CD8-positive, alpha-beta T cell (primary cell): ENCODE measurements at regions of chr15 and their contacts with region 1.

Region 1: DNA sequence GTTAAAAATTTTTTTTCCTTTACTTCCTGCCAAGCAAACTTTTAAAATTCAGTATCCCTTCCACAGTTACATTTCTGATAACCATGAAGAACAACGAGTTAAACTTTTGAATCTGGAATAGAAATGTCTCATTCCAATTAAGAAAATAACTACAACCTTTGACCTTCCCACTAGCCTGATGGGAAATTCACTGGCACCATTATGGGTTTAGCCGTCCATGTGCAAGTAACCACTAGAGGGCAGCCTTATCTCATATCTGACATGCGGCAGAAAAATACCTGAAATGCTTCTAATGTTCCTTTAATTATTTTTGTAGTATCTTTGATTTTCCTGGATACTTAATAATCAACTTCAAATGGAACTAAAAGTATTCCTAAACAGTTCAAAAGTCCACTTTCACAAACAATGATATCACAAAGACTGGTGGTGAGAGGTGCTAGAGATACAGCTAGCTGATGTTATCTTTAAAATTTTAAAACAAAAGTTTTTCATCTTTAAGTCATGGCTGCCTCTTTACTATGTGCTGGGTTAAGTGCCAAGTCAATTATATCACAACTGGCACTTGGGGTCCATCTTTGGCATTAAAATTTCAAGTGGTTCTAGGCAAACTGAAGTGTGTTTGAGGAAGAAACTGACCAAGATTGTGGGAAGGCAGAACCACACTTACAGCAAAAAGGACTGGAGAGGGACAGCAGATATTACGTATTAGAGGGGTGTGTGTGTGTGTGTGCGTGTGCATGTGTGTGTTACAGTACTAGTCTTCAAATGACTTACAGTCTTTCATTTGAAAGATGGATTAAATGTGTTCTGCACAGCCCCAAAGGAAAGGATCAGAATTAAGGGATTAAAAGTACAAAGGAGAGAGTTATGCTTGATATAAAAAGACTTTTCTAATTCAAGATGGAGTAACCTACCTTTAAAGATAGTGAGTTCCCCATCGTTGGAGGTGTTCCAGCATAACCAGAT is 107.1 kb upstream of the ICE2 start:
- DNase-seq: peak in 6 of 9 experiments; percentile 63 to 90 (median 66)
- ATAC-seq: peak; percentile 13
- H3K4me3 ChIP-seq: no peak overlapping the region
- H3K4me3 Mint-ChIP-seq: peak overlapping the region; percentile 77
- H3K27ac ChIP-seq: peak overlapping the region in 1 of 2 experiments; percentile 85
- H3K27ac Mint-ChIP-seq: peak overlapping the region; percentile 92
- H3K4me1 ChIP-seq: peaks cover 89% of the 10 kb centered on the region
- H3K4me1 Mint-ChIP-seq: peaks cover 91% of the 10 kb centered on the region
- H3K27me3 ChIP-seq: no peaks in the 10 kb centered on the region
- H3K27me3 Mint-ChIP-seq: no peaks in the 10 kb centered on the region
- CTCF ChIP-seq: peak; percentile 83

Region 2: GRCh38 chr15:60471314-60471713 is 114.7 kb before region 1 on chr15:
- CTCF ChIA-PET with region 1: no interaction called
- POLR2A ChIA-PET with region 1: no interaction called
- intact Hi-C with region 1: no loop called
- DNase-seq: no peak
- ATAC-seq: no peak
- H3K4me3 ChIP-seq: no peak overlapping the region
- H3K4me3 Mint-ChIP-seq: no peak overlapping the region
- H3K27ac ChIP-seq: no peak overlapping the region
- H3K27ac Mint-ChIP-seq: no peak overlapping the region
- H3K4me1 ChIP-seq: peaks cover 5% of the 10 kb centered on the region
- H3K4me1 Mint-ChIP-seq: peaks cover 32% of the 10 kb centered on the region
- H3K27me3 ChIP-seq: no peaks in the 10 kb centered on the region
- H3K27me3 Mint-ChIP-seq: no peaks in the 10 kb centered on the region
- CTCF ChIP-seq: no peak

Region 3: GRCh38 chr15:60507596-60508424 is 78.2 kb before region 1 on chr15:
- CTCF ChIA-PET with region 1: interaction called, 27 read pairs
- POLR2A ChIA-PET with region 1: interaction called, 5 read pairs
- intact Hi-C with region 1: loop called in 1 of 2 experiments (anchors 1 kb)
- DNase-seq: peak in 8 of 9 experiments; percentile 18 to 89 (median 52)
- ATAC-seq: peak; percentile 83
- H3K4me3 ChIP-seq: no peak overlapping the region
- H3K4me3 Mint-ChIP-seq: no peak overlapping the region
- H3K27ac ChIP-seq: peak overlapping the region in 1 of 2 experiments; percentile 52
- H3K27ac Mint-ChIP-seq: peak overlapping the region; percentile 47
- H3K4me1 ChIP-seq: peaks cover 33% of the 10 kb centered on the region
- H3K4me1 Mint-ChIP-seq: peaks cover 52% of the 10 kb centered on the region
- H3K27me3 ChIP-seq: no peaks in the 10 kb centered on the region
- H3K27me3 Mint-ChIP-seq: no peaks in the 10 kb centered on the region
- CTCF ChIP-seq: peak; percentile 86

Region 4: DNA sequence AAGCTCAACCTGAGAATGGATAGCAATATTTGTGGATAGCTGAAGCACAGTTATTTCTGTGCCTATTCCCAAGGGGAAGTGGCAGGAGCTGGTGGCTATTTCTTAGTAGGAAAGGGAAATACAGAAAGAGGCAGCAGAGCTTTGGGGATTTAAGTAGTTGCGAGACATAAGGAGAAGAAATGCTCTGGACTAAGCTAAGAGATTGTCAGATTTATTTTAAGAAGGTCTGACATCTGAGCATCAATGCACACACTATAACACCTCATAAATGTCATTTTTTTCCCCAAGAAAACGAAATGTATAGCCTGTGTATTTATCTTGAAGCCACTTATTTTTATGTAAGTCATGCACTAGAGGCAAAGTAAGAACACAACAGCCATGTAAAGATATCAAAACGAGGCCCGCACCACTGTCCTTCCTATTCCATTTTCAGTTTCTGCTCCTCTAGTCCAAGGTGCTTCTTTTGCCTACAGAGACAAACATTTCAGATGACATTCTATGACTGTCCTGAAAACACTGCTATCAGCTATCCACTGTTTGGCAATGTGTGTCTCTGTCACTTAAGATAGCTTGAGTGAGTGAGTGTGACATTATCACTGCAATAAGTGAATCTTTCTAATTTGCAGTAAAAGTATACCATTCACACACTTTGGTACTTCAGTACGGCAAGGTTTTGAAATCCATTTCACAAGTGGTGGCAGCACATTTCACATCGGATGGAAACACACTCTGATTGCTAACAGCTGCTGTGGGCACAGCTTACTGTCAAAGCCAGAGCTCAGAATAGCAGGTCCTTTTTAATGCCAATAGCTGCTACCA is 44.3 kb before region 1 on chr15:
- CTCF ChIA-PET with region 1: interaction called, 45 read pairs
- POLR2A ChIA-PET with region 1: interaction called, 6 read pairs
- intact Hi-C with region 1: loop called (anchors 5 kb)
- DNase-seq: peak in 3 of 9 experiments; percentile 34 to 57 (median 44)
- ATAC-seq: no peak
- H3K4me3 ChIP-seq: no peak overlapping the region
- H3K4me3 Mint-ChIP-seq: peak overlapping the region; percentile 35
- H3K27ac ChIP-seq: peak overlapping the region in 1 of 2 experiments; percentile 50
- H3K27ac Mint-ChIP-seq: peak overlapping the region; percentile 70
- H3K4me1 ChIP-seq: peaks cover 93% of the 10 kb centered on the region
- H3K4me1 Mint-ChIP-seq: peaks cover 94% of the 10 kb centered on the region
- H3K27me3 ChIP-seq: no peaks in the 10 kb centered on the region
- H3K27me3 Mint-ChIP-seq: no peaks in the 10 kb centered on the region
- CTCF ChIP-seq: no peak

Region 5: GRCh38 chr15:60568301-60568742 is 17.7 kb before region 1 on chr15:
- CTCF ChIA-PET with region 1: interaction called, 36 read pairs
- POLR2A ChIA-PET with region 1: interaction called, 23 read pairs
- intact Hi-C with region 1: loop called in 1 of 2 experiments (anchors 1 kb)
- DNase-seq: peak in 1 of 9 experiments; percentile 41
- ATAC-seq: no peak
- H3K4me3 ChIP-seq: no peak overlapping the region
- H3K4me3 Mint-ChIP-seq: peak overlapping the region; percentile 27
- H3K27ac ChIP-seq: peak overlapping the region in 1 of 2 experiments; percentile 68
- H3K27ac Mint-ChIP-seq: peak overlapping the region; percentile 80
- H3K4me1 ChIP-seq: peaks cover 93% of the 10 kb centered on the region
- H3K4me1 Mint-ChIP-seq: peaks cover 93% of the 10 kb centered on the region
- H3K27me3 ChIP-seq: no peaks in the 10 kb centered on the region
- H3K27me3 Mint-ChIP-seq: no peaks in the 10 kb centered on the region
- CTCF ChIP-seq: no peak

Region 6: GRCh38 chr15:60635507-60636352 is 49.7 kb after region 1 on chr15:
- CTCF ChIA-PET with region 1: no interaction called
- POLR2A ChIA-PET with region 1: no interaction called
- intact Hi-C with region 1: no loop called
- DNase-seq: no peak
- ATAC-seq: no peak
- H3K4me3 ChIP-seq: no peak overlapping the region
- H3K4me3 Mint-ChIP-seq: no peak overlapping the region
- H3K27ac ChIP-seq: no peak overlapping the region
- H3K27ac Mint-ChIP-seq: no peak overlapping the region
- H3K4me1 ChIP-seq: no peaks in the 10 kb centered on the region
- H3K4me1 Mint-ChIP-seq: peaks cover 12% of the 10 kb centered on the region
- H3K27me3 ChIP-seq: no peaks in the 10 kb centered on the region
- H3K27me3 Mint-ChIP-seq: no peaks in the 10 kb centered on the region
- CTCF ChIP-seq: no peak

Region 7: DNA sequence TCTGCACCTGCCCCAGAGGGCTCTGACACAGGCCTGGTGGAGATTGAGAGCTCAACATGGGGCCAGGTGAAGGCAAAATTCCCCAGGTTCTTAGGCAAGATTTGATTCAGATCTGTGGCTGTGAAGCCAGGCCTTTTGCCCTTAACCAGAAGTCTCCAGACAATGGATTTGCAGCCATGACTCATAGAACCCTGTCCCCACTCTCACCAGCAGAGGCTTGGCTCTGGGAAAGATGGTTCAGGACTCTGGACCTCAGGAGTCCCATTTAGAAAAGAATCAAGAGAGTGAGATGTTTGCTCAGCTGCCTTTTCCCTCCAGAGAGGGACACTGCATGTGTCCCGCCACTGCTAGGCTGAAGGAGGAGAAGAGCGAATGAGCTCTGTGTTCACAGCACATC is 254.3 kb after region 1 on chr15:
- CTCF ChIA-PET with region 1: interaction called, 33 read pairs
- POLR2A ChIA-PET with region 1: interaction called, 13 read pairs
- intact Hi-C with region 1: loop called (anchors 2 to 5 kb)
- DNase-seq: peak in 4 of 9 experiments; percentile 4 to 55 (median 28)
- ATAC-seq: no peak
- H3K4me3 ChIP-seq: peak overlapping the region; percentile 43
- H3K4me3 Mint-ChIP-seq: peak overlapping the region; percentile 86
- H3K27ac ChIP-seq: peak overlapping the region; percentile 51 to 84
- H3K27ac Mint-ChIP-seq: peak overlapping the region; percentile 96
- H3K4me1 ChIP-seq: peaks cover 60% of the 10 kb centered on the region
- H3K4me1 Mint-ChIP-seq: peaks cover 82% of the 10 kb centered on the region
- H3K27me3 ChIP-seq: no peaks in the 10 kb centered on the region
- H3K27me3 Mint-ChIP-seq: no peaks in the 10 kb centered on the region
- CTCF ChIP-seq: no peak

Region 8: GRCh38 chr15:60916679-60917460 is 330.8 kb after region 1 on chr15:
- CTCF ChIA-PET with region 1: interaction called, 100 read pairs
- POLR2A ChIA-PET with region 1: interaction called, 7 read pairs
- intact Hi-C with region 1: loop called (anchors 1 kb)
- DNase-seq: peak; percentile 70 to 95 (median 88)
- ATAC-seq: peak; percentile 99
- H3K4me3 ChIP-seq: no peak overlapping the region
- H3K4me3 Mint-ChIP-seq: no peak overlapping the region
- H3K27ac ChIP-seq: peak overlapping the region in 1 of 2 experiments; percentile 31
- H3K27ac Mint-ChIP-seq: peak overlapping the region; percentile 72
- H3K4me1 ChIP-seq: peaks cover 8% of the 10 kb centered on the region
- H3K4me1 Mint-ChIP-seq: peaks cover 11% of the 10 kb centered on the region
- H3K27me3 ChIP-seq: no peaks in the 10 kb centered on the region
- H3K27me3 Mint-ChIP-seq: no peaks in the 10 kb centered on the region
- CTCF ChIP-seq: peak; percentile 92

Region 9: GRCh38 chr15:61558172-61559136 is 972.4 kb after region 1 on chr15:
- CTCF ChIA-PET with region 1: no interaction called
- POLR2A ChIA-PET with region 1: no interaction called
- intact Hi-C with region 1: no loop called
- DNase-seq: no peak
- ATAC-seq: no peak
- H3K4me3 ChIP-seq: no peak overlapping the region
- H3K4me3 Mint-ChIP-seq: no peak overlapping the region
- H3K27ac ChIP-seq: no peak overlapping the region
- H3K27ac Mint-ChIP-seq: no peak overlapping the region
- H3K4me1 ChIP-seq: no peaks in the 10 kb centered on the region
- H3K4me1 Mint-ChIP-seq: no peaks in the 10 kb centered on the region
- H3K27me3 ChIP-seq: peaks cover 0 to 3% of the 10 kb centered on the region in 2 experiments
- H3K27me3 Mint-ChIP-seq: peaks cover 24% of the 10 kb centered on the region
- CTCF ChIP-seq: no peak